ENCODE measurements at regions of chr6 and their contacts with region 1.

Region 1: GRCh38 chr6:30877419-30878371 is 6.6 kb upstream of the DDR1 start:
- DNase-seq: peak; percentile 87
- ATAC-seq: peak; percentile 82
- H3K4me3 Mint-ChIP-seq: peak overlapping the region; percentile 73
- H3K27ac Mint-ChIP-seq: peak overlapping the region; percentile 92
- H3K4me1 Mint-ChIP-seq: peaks cover 41% of the 10 kb centered on the region
- H3K27me3 Mint-ChIP-seq: no peaks in the 10 kb centered on the region
- CTCF ChIP-seq: peak; percentile 93

Region 2: GRCh38 chr6:30717042-30717844 is 160.5 kb before region 1 on chr6 and contains the start of gene MDC1:
- CTCF ChIA-PET with region 1: no interaction called
- POLR2A ChIA-PET with region 1: no interaction called
- intact Hi-C with region 1: no loop called
- DNase-seq: peak; percentile 100
- ATAC-seq: peak; percentile 78
- H3K4me3 Mint-ChIP-seq: peak within 1 kb of the TSS; percentile 80
- H3K27ac Mint-ChIP-seq: peak within 1 kb of the TSS; percentile 99
- H3K4me1 Mint-ChIP-seq: peaks cover 37% of the 10 kb centered on the region
- H3K27me3 Mint-ChIP-seq: no peaks in the 10 kb centered on the region
- CTCF ChIP-seq: no peak
- total RNA-seq, gene MDC1: 80.4 to 90.7 TPM

Region 3: GRCh38 chr6:30821862-30822782 is 55.6 kb before region 1 on chr6:
- CTCF ChIA-PET with region 1: interaction called, 82 read pairs
- POLR2A ChIA-PET with region 1: interaction called, 8 read pairs
- intact Hi-C with region 1: no loop called
- DNase-seq: no peak
- ATAC-seq: no peak
- H3K4me3 Mint-ChIP-seq: no peak overlapping the region
- H3K27ac Mint-ChIP-seq: peak overlapping the region; percentile 82
- H3K4me1 Mint-ChIP-seq: peaks cover 79% of the 10 kb centered on the region
- H3K27me3 Mint-ChIP-seq: no peaks in the 10 kb centered on the region
- CTCF ChIP-seq: peak; percentile 74

Region 4: DNA sequence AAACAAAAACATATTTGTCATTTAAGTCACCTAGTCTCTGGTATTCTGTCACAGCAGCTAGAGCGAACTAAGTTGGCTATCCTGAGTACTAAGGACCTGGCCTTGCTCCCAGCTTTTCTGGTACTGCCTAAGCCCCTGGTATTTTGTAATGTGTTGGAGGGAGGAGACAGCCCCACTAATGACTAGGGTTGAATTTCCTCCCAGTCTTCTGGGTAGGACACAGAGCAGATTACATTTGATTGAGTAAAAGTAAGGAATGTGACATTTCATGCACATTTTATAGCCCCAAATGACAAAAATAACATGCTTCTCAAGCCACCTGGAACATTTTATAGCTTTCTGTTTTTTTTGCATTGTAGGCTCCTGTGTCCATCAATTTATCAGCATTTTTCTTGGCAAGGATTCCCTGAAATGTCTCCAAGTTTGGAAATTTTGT is 41.2 kb before region 1 on chr6:
- CTCF ChIA-PET with region 1: interaction called, 16 read pairs
- POLR2A ChIA-PET with region 1: interaction called, 4 read pairs
- intact Hi-C with region 1: no loop called
- DNase-seq: no peak
- ATAC-seq: no peak
- H3K4me3 Mint-ChIP-seq: no peak overlapping the region
- H3K27ac Mint-ChIP-seq: no peak overlapping the region
- H3K4me1 Mint-ChIP-seq: peaks cover 23% of the 10 kb centered on the region
- H3K27me3 Mint-ChIP-seq: no peaks in the 10 kb centered on the region
- CTCF ChIP-seq: no peak

Measured in activated CD8-positive, alpha-beta T cell treated with anti-CD3 and anti-CD28 coated beads for 36 hours (primary cell).